Naive thymus-derived CD4-positive, alpha-beta T cell (primary cell): ENCODE measurements at regions of chr5 and their contacts with region 1.

Region 1: DNA sequence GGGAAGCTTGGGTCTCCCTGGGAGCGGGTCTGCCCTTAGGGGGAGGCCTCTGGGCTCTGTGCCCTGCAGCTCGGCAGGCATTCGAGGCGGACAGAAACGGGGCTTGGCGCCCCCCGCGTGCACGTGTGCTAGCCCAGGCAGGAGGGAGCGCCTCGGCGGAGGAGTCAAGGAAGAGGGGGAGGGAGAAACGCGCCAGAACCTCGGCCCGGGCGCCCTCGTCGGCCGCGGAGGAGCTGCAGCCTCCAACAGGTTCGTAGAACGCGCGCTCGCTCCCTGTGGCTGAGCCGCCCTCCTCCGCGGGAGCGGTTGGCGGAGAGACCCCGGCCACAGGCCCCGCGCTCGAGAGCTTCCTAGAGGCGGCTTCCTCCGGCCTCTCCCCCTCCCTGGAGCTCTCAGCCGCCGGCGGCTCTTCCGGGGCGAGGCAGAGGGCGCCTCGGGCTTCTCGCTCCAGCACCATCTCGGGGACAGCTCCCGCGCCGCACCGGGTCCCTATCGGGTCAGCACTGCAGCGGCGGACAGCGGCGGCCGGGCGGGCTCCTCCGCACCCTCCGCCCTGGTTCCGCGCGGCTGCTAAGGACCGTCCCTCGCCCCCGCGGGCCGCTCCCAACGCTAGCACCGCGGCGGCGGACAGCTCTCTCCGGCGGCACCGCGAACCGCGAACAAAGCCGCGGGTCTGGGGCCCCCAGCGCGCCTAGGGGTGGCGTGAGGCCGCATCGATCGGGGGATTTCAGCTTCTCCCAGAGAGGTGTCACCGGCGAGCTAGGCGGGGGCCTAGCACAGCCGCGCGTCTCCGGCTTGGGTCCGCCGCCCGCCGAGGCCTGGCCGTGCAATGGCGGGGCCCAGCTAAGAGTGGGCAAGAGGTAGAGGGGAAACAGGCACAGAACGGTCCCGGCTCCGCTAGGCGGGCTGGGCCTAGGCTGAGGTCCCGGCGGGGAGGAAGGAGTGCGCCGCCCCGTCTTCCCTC is 74.6 kb upstream of the CPLX2 start:
- DNase-seq: peak; percentile 76 to 88 (median 84)
- ATAC-seq: peak; percentile 100
- H3K4me3 ChIP-seq: no peak overlapping the region
- H3K4me3 Mint-ChIP-seq: peak overlapping the region in 2 of 10 donors; percentile 29 to 47
- H3K27ac ChIP-seq: no peak overlapping the region
- H3K27ac Mint-ChIP-seq: no peak overlapping the region
- H3K4me1 ChIP-seq: peaks cover 0 to 7% of the 10 kb centered on the region in 2 donors
- H3K4me1 Mint-ChIP-seq: peaks cover 4 to 27% (median 18%) of the 10 kb centered on the region in 7 donors
- H3K27me3 ChIP-seq: peaks cover 7 to 11% of the 10 kb centered on the region in 2 donors
- H3K27me3 Mint-ChIP-seq: peaks cover 50 to 74% (median 68%) of the 10 kb centered on the region in 5 donors

Region 2: GRCh38 chr5:175778951-175779538 is 17.8 kb before region 1 on chr5:
- CTCF ChIA-PET with region 1: no interaction called
- POLR2A ChIA-PET with region 1: no interaction called
- intact Hi-C with region 1: no loop called
- DNase-seq: no peak
- ATAC-seq: no peak
- H3K4me3 ChIP-seq: no peak overlapping the region
- H3K4me3 Mint-ChIP-seq: no peak overlapping the region
- H3K27ac ChIP-seq: no peak overlapping the region
- H3K27ac Mint-ChIP-seq: no peak overlapping the region
- H3K4me1 ChIP-seq: no peaks in the 10 kb centered on the region
- H3K4me1 Mint-ChIP-seq: no peaks in the 10 kb centered on the region
- H3K27me3 ChIP-seq: no peaks in the 10 kb centered on the region
- H3K27me3 Mint-ChIP-seq: peaks cover 27 to 45% (median 36%) of the 10 kb centered on the region in 5 donors

Region 3: GRCh38 chr5:175814691-175815090 is 17.9 kb after region 1 on chr5:
- CTCF ChIA-PET with region 1: no interaction called
- POLR2A ChIA-PET with region 1: no interaction called
- intact Hi-C with region 1: no loop called
- DNase-seq: no peak
- ATAC-seq: no peak
- H3K4me3 ChIP-seq: no peak overlapping the region
- H3K4me3 Mint-ChIP-seq: no peak overlapping the region
- H3K27ac ChIP-seq: no peak overlapping the region
- H3K27ac Mint-ChIP-seq: no peak overlapping the region
- H3K4me1 ChIP-seq: no peaks in the 10 kb centered on the region
- H3K4me1 Mint-ChIP-seq: no peaks in the 10 kb centered on the region
- H3K27me3 ChIP-seq: no peaks in the 10 kb centered on the region
- H3K27me3 Mint-ChIP-seq: peaks cover 2 to 23% (median 12%) of the 10 kb centered on the region in 5 donors

Region 4: DNA sequence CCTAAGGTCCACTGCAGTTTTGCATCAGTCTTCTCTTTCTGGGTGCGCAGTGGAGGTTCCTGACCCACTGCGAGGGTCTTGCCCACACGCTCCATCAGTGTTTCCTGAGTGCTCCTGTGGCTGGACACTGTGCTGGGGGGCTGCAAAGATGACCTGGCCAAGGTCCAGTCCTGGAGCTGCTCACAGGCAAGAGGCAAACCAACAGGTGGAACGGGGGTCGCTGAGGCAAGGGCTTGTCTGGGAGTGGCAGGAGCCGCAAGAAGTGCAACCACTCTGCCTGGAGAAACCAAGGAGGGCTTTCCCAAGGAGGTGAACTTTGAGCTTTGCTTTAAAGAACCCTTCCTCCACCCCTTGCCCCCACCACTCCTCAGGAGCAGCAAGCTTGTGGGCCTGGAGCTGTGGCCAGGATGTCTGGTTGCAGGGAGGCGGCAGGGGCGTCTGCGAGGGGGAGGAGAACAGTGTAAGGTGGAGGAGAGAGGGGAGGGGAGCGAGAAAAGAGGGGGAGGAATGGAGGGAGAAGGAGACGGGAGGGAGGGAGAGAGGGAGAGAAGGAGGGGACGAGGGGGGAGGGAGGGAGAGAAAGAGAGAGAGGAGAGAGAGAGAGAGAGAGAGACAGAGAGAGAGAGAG is 74.1 kb after region 1 on chr5:
- CTCF ChIA-PET with region 1: no interaction called
- POLR2A ChIA-PET with region 1: no interaction called
- intact Hi-C with region 1: loop called (anchors 1 kb)
- DNase-seq: no peak
- ATAC-seq: no peak
- H3K4me3 ChIP-seq: no peak overlapping the region
- H3K4me3 Mint-ChIP-seq: peak overlapping the region in 1 of 10 donors; percentile 71
- H3K27ac ChIP-seq: no peak overlapping the region
- H3K27ac Mint-ChIP-seq: no peak overlapping the region
- H3K4me1 ChIP-seq: peaks cover 0 to 5% of the 10 kb centered on the region in 2 donors
- H3K4me1 Mint-ChIP-seq: peaks cover 6 to 19% (median 14%) of the 10 kb centered on the region in 7 donors
- H3K27me3 ChIP-seq: peaks cover 7 to 13% of the 10 kb centered on the region in 2 donors
- H3K27me3 Mint-ChIP-seq: peaks cover 44 to 69% (median 47%) of the 10 kb centered on the region in 5 donors

Region 5: GRCh38 chr5:176361437-176362232 is 564.8 kb after region 1 on chr5 and contains the start of gene KIAA1191:
- CTCF ChIA-PET with region 1: no interaction called
- POLR2A ChIA-PET with region 1: no interaction called
- intact Hi-C with region 1: loop called in 1 of 2 experiments (anchors 10 kb)
- DNase-seq: peak; percentile 80 to 96 (median 93)
- ATAC-seq: peak; percentile 96
- H3K4me3 ChIP-seq: peak within 1 kb of the TSS; percentile 82
- H3K4me3 Mint-ChIP-seq: peak within 1 kb of the TSS; percentile 93 to 99 (median 98)
- H3K27ac ChIP-seq: peak within 1 kb of the TSS; percentile 80
- H3K27ac Mint-ChIP-seq: peak within 1 kb of the TSS; percentile 91 to 99 (median 94)
- H3K4me1 ChIP-seq: peaks cover 19 to 24% of the 10 kb centered on the region in 2 donors
- H3K4me1 Mint-ChIP-seq: peaks cover 21 to 49% (median 38%) of the 10 kb centered on the region in 7 donors
- H3K27me3 ChIP-seq: no peaks in the 10 kb centered on the region
- H3K27me3 Mint-ChIP-seq: no peaks in the 10 kb centered on the region
- total RNA-seq, gene KIAA1191: 59.4 to 76.6 (median 65.9) TPM